ENCODE measurements at regions of chr15 and their contacts with region 1.

Region 1: GRCh38 chr15:93035953-93036800 is 52.8 kb downstream of the RGMA start:
- DNase-seq: peak in 6 of 9 experiments; percentile 20 to 74 (median 50)
- ATAC-seq: peak; percentile 90
- H3K4me3 ChIP-seq: no peak overlapping the region
- H3K4me3 Mint-ChIP-seq: peak overlapping the region; percentile 75
- H3K27ac ChIP-seq: no peak overlapping the region
- H3K27ac Mint-ChIP-seq: no peak overlapping the region
- H3K4me1 ChIP-seq: peaks cover 4% of the 10 kb centered on the region
- H3K4me1 Mint-ChIP-seq: peaks cover 8% of the 10 kb centered on the region
- H3K27me3 ChIP-seq: no peaks in the 10 kb centered on the region
- H3K27me3 Mint-ChIP-seq: peaks cover 4% of the 10 kb centered on the region
- CTCF ChIP-seq: peak; percentile 36

Region 2: GRCh38 chr15:92958105-92958504 is 78.1 kb before region 1 on chr15:
- CTCF ChIA-PET with region 1: no interaction called
- POLR2A ChIA-PET with region 1: no interaction called
- intact Hi-C with region 1: no loop called
- DNase-seq: peak in 6 of 9 experiments; percentile 25 to 76 (median 50)
- ATAC-seq: peak; percentile 90
- H3K4me3 ChIP-seq: no peak overlapping the region
- H3K4me3 Mint-ChIP-seq: peak overlapping the region; percentile 4
- H3K27ac ChIP-seq: peak overlapping the region in 1 of 2 experiments; percentile 27
- H3K27ac Mint-ChIP-seq: peak overlapping the region; percentile 89
- H3K4me1 ChIP-seq: peaks cover 5% of the 10 kb centered on the region
- H3K4me1 Mint-ChIP-seq: peaks cover 50% of the 10 kb centered on the region
- H3K27me3 ChIP-seq: no peaks in the 10 kb centered on the region
- H3K27me3 Mint-ChIP-seq: no peaks in the 10 kb centered on the region
- CTCF ChIP-seq: no peak

Region 3: DNA sequence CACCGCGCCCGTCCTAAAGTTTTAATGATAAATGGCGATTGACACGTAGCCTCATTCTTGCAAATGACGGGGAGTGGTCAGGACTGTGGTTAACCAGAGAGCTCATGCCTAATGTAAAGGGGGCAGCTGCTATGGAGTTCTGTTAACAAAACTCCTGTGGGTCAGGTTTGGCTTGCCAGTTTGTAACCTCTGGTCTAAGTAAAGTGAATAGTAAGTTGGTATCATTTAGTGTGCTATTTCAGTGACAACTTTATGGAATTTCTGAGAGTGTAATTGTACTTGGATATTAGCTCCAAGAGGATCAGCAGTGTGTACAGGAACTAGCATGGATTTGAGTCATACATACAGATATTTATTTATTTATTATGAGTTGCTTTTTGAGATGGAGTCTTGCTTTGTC is 35.0 kb before region 1 on chr15:
- CTCF ChIA-PET with region 1: no interaction called
- POLR2A ChIA-PET with region 1: no interaction called
- intact Hi-C with region 1: no loop called
- DNase-seq: no peak
- ATAC-seq: no peak
- H3K4me3 ChIP-seq: no peak overlapping the region
- H3K4me3 Mint-ChIP-seq: no peak overlapping the region
- H3K27ac ChIP-seq: no peak overlapping the region
- H3K27ac Mint-ChIP-seq: no peak overlapping the region
- H3K4me1 ChIP-seq: no peaks in the 10 kb centered on the region
- H3K4me1 Mint-ChIP-seq: peaks cover 20% of the 10 kb centered on the region
- H3K27me3 ChIP-seq: no peaks in the 10 kb centered on the region
- H3K27me3 Mint-ChIP-seq: no peaks in the 10 kb centered on the region
- CTCF ChIP-seq: no peak

Region 4: GRCh38 chr15:93048759-93049161 is 12.6 kb after region 1 on chr15:
- CTCF ChIA-PET with region 1: interaction called, 59 read pairs
- POLR2A ChIA-PET with region 1: interaction called, 7 read pairs
- intact Hi-C with region 1: loop called in 1 of 2 experiments (anchors 2 kb)
- DNase-seq: peak in 3 of 9 experiments; percentile 43 to 49 (median 45)
- ATAC-seq: no peak
- H3K4me3 ChIP-seq: no peak overlapping the region
- H3K4me3 Mint-ChIP-seq: peak overlapping the region; percentile 8
- H3K27ac ChIP-seq: no peak overlapping the region
- H3K27ac Mint-ChIP-seq: no peak overlapping the region
- H3K4me1 ChIP-seq: peaks cover 35% of the 10 kb centered on the region
- H3K4me1 Mint-ChIP-seq: peaks cover 40% of the 10 kb centered on the region
- H3K27me3 ChIP-seq: no peaks in the 10 kb centered on the region
- H3K27me3 Mint-ChIP-seq: no peaks in the 10 kb centered on the region
- CTCF ChIP-seq: no peak

Region 5: GRCh38 chr15:93060336-93061263 is 24.4 kb after region 1 on chr15:
- CTCF ChIA-PET with region 1: interaction called, 59 read pairs
- POLR2A ChIA-PET with region 1: interaction called, 3 read pairs
- intact Hi-C with region 1: no loop called
- DNase-seq: no peak
- ATAC-seq: no peak
- H3K4me3 ChIP-seq: no peak overlapping the region
- H3K4me3 Mint-ChIP-seq: no peak overlapping the region
- H3K27ac ChIP-seq: no peak overlapping the region
- H3K27ac Mint-ChIP-seq: no peak overlapping the region
- H3K4me1 ChIP-seq: no peaks in the 10 kb centered on the region
- H3K4me1 Mint-ChIP-seq: peaks cover 5% of the 10 kb centered on the region
- H3K27me3 ChIP-seq: no peaks in the 10 kb centered on the region
- H3K27me3 Mint-ChIP-seq: peaks cover 9% of the 10 kb centered on the region
- CTCF ChIP-seq: no peak

Region 6: DNA sequence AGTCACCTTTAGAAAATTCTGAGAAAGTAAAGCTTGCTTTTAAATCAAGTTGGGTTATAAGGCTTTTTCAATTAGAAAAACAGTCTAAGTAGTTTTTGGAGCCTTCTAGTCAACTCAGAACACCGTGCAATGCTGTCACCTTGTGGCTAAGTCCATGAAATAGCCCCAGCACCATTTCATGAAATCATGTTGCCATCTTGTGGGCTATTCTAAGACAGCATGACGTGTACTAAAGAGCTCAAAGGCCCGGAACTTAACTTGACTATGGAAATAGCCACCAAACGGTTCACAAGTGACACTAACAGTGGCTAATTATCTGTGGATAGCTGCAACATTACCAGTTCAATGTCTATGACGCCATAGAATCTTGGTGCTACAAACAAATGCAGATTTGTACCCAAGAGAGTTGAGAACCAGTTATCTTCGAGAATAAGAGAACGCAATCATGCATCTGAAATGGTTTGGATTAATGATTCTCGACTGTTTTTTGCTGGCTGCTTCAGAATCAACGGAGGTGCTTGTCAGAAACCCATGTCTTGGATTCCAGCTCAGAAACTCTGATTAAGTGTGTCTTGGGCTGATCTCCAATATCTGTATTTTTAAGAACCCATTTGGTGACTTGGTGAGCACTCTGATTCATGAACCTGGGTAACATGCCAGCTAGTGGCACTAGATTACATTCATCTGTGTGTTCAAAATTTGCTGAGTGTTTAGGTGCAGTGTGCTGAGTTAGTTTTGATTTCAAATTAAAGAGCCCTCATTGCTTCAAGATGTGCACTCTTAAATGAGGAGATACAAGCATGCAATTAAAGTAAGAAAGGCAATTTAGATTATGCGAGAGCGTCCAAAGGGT is 1084.0 kb after region 1 on chr15:
- CTCF ChIA-PET with region 1: interaction called, 32 read pairs
- POLR2A ChIA-PET with region 1: no interaction called
- intact Hi-C with region 1: loop called in 1 of 2 experiments (anchors 1 kb)
- DNase-seq: peak; percentile 2 to 80 (median 24)
- ATAC-seq: peak; percentile 94
- H3K4me3 ChIP-seq: no peak overlapping the region
- H3K4me3 Mint-ChIP-seq: no peak overlapping the region
- H3K27ac ChIP-seq: no peak overlapping the region
- H3K27ac Mint-ChIP-seq: no peak overlapping the region
- H3K4me1 ChIP-seq: no peaks in the 10 kb centered on the region
- H3K4me1 Mint-ChIP-seq: no peaks in the 10 kb centered on the region
- H3K27me3 ChIP-seq: no peaks in the 10 kb centered on the region
- H3K27me3 Mint-ChIP-seq: no peaks in the 10 kb centered on the region
- CTCF ChIP-seq: peak; percentile 66